Activated B cell treated with CpG ODN at 0.5 μM for 24 hours (primary cell): ENCODE measurements at regions of chr4 and their contacts with region 1.

Region 1: GRCh38 chr4:152434011-152434410 is 101.9 kb downstream of the FBXW7 start:
- DNase-seq: no peak
- ATAC-seq: peak; percentile 81
- H3K4me3 Mint-ChIP-seq: no peak overlapping the region
- H3K27ac Mint-ChIP-seq: no peak overlapping the region
- H3K4me1 Mint-ChIP-seq: peaks cover 36% of the 10 kb centered on the region
- H3K27me3 Mint-ChIP-seq: no peaks in the 10 kb centered on the region
- CTCF ChIP-seq: no peak

Region 2: GRCh38 chr4:152448038-152448707 is 14.2 kb after region 1 on chr4:
- CTCF ChIA-PET with region 1: no interaction called
- POLR2A ChIA-PET with region 1: no interaction called
- intact Hi-C with region 1: loop called (anchors 2 kb)
- DNase-seq: no peak
- ATAC-seq: no peak
- H3K4me3 Mint-ChIP-seq: no peak overlapping the region
- H3K27ac Mint-ChIP-seq: no peak overlapping the region
- H3K4me1 Mint-ChIP-seq: peaks cover 17% of the 10 kb centered on the region
- H3K27me3 Mint-ChIP-seq: no peaks in the 10 kb centered on the region
- CTCF ChIP-seq: no peak